A549 (cell line): ENCODE measurements at regions of chr22 and their contacts with region 1.

Region 1: DNA sequence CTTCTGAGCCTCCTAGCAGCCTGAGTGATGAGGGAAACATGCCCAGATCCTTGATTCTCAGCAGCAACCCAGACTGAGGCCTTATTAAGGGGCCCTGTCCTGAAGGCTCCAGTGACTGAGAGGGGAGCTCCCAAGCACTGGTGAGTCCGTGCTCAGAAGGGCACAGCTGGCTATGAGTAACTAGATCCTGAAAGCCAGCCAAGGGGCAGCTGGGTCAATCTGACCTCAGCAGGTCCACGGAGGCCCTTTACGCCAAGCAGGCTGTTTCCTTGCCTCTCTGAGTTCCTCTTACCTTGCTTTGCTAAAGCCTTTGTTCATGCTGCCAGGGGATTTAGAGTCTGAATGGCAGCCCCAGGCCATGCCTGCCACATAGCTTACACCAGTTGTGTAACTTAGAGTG is 19.3 kb upstream of the MIEF1 start:
- DNase-seq: no peak
- ATAC-seq: no peak
- H3K4me3 ChIP-seq: no peak overlapping the region
- H3K27ac ChIP-seq: no peak overlapping the region
- H3K4me1 ChIP-seq: no peaks in the 10 kb centered on the region
- CTCF ChIP-seq: no peak
- EP300 ChIP-seq: no peak
- POLR2A ChIP-seq: no peak
- RAD21 ChIP-seq: no peak

Region 2: GRCh38 chr22:39428578-39429071 is 54.1 kb before region 1 on chr22:
- CTCF ChIA-PET with region 1: no interaction called
- POLR2A ChIA-PET with region 1: no interaction called
- DNase-seq: no peak
- ATAC-seq: no peak; a peak in 1 of 6 replicates
- H3K4me3 ChIP-seq: no peak overlapping the region
- H3K27ac ChIP-seq: no peak overlapping the region
- H3K4me1 ChIP-seq: no peaks in the 10 kb centered on the region
- CTCF ChIP-seq: no peak
- EP300 ChIP-seq: no peak
- POLR2A ChIP-seq: no peak
- RAD21 ChIP-seq: no peak

Region 3: DNA sequence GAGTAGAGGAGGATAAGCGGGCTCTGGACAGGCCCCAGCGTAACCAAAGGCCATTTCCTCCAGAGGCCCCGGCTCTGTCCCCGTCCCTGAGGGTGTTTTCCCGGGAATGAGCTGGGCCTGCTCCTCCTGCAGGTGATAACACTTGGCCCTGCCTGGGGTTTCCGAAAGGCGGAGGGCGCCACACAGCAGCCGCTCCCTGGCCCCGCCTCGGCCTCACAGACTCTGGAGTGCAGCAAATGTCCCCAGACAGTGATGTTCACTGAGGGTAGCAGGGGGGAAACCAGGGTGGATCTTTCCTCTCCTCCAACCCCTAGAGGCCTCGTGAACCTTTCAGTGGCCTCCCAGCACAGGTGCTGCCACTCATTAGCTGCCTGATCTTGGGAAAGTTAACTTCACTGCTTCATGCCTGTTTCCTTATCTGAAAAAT is 36.5 kb before region 1 on chr22:
- CTCF ChIA-PET with region 1: no interaction called
- POLR2A ChIA-PET with region 1: no interaction called
- DNase-seq: no peak
- ATAC-seq: peak in 1 of 2 experiments; percentile 31; a peak in 1 of 6 replicates
- H3K4me3 ChIP-seq: no peak overlapping the region
- H3K27ac ChIP-seq: no peak overlapping the region
- H3K4me1 ChIP-seq: no peaks in the 10 kb centered on the region
- CTCF ChIP-seq: no peak
- EP300 ChIP-seq: no peak
- POLR2A ChIP-seq: no peak
- RAD21 ChIP-seq: no peak

Region 4: GRCh38 chr22:39496131-39496838 is 13.5 kb after region 1 on chr22:
- CTCF ChIA-PET with region 1: interaction called, 43 read pairs
- POLR2A ChIA-PET with region 1: no interaction called
- DNase-seq: peak; percentile 48 to 69
- ATAC-seq: peak; percentile 90 to 93
- H3K4me3 ChIP-seq: no peak overlapping the region
- H3K27ac ChIP-seq: no peak overlapping the region
- H3K4me1 ChIP-seq: peaks cover under 1% of the 10 kb centered on the region; the same call in 1 of the 3 replicates
- CTCF ChIP-seq: peak; percentile 53
- EP300 ChIP-seq: no peak
- POLR2A ChIP-seq: no peak
- RAD21 ChIP-seq: peak in 1 of 2 experiments; percentile 12; a peak in 1 of 5 replicates